K562 (cell line): ENCODE measurements at regions of chr5 and their contacts with region 1.

Region 1: GRCh38 chr5:43210570-43210969 is 18.5 kb downstream of the NIM1K start:
- DNase-seq: no peak
- ATAC-seq: no peak
- H3K4me3 ChIP-seq: no peak overlapping the region
- H3K27ac ChIP-seq: no peak overlapping the region
- H3K4me1 ChIP-seq: peaks cover 26 to 39% of the 10 kb centered on the region in 2 experiments
- H3K27me3 ChIP-seq: no peaks in the 10 kb centered on the region
- CTCF ChIP-seq: no peak
- EP300 ChIP-seq: no peak
- POLR2A ChIP-seq: no peak
- RAD21 ChIP-seq: no peak

Region 2: GRCh38 chr5:43078986-43079355 is 131.6 kb before region 1 on chr5:
- CTCF ChIA-PET with region 1: no interaction called
- POLR2A ChIA-PET with region 1: no interaction called
- in situ Hi-C with region 1: no loop called
- intact Hi-C with region 1: loop called (anchors 5 kb)
- DNase-seq: peak in 2 of 4 experiments; percentile 29 to 71
- ATAC-seq: peak; percentile 10; the same call in 1 of the 3 replicates
- H3K4me3 ChIP-seq: no peak overlapping the region
- H3K27ac ChIP-seq: no peak overlapping the region
- H3K4me1 ChIP-seq: peaks cover 20 to 53% of the 10 kb centered on the region in 2 experiments
- H3K27me3 ChIP-seq: no peaks in the 10 kb centered on the region
- CTCF ChIP-seq: no peak
- EP300 ChIP-seq: no peak
- POLR2A ChIP-seq: no peak
- RAD21 ChIP-seq: no peak